ENCODE measurements at regions of chr10 and their contacts with region 1.

Region 1: DNA sequence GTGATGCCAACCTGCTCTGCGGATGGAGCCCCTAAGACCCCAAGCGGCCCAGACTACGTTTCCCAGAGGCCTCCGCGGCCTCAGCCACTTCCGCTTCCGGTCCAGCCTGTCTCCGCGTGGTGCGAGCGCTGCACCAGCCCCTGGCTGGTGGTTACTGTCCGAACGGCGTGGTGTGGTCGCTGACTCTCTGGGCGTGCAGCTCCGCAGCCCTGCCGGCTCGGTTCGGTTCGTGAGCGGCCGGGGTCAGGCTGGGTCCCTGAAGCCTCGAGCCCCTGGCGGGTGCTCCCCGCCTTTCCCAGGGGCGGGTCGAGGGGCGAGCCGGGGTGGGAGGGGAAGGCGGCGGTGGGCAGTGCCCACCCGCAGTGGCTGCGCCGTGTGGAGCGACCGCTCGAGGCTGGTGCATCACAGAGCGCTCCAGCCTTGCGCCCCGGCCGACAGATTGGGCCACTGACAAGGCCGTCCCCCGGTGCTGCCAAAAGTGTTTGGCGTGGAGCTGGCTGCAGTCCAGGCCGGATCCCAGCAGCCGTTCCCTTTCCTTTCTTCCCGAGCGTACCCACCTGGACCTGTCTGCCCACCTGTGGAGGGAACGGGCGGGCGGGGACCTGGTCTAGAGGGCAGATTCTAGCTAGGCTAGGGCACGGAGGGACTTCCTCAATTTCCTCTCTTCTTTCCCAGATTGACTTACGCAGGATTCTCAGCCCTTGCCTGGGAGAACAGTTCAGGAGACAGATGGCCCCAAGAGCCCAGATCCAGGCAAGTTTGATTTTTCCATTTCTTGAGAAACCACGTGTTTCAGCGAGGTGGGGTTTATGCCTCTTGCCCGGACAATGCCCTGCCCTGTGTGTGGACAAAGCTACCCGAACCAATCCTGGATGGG is at the start of gene ZNF485:
- DNase-seq: peak; percentile 89 to 91 (median 90)
- ATAC-seq: peak; percentile 99
- H3K4me3 ChIP-seq: peak within 1 kb of the TSS; percentile 75
- H3K27ac ChIP-seq: peak within 1 kb of the TSS; percentile 75
- H3K4me1 ChIP-seq: peaks cover 0 to 12% of the 10 kb centered on the region in 2 experiments; a peak in 3 of 5 replicates
- H3K27me3 ChIP-seq: peaks cover 4 to 11% of the 10 kb centered on the region in 2 experiments; a peak in 4 of 5 replicates
- CTCF ChIP-seq: no peak
- EP300 ChIP-seq: no peak
- POLR2A ChIP-seq: peak; percentile 91
- RAD21 ChIP-seq: peak in 1 of 2 experiments; percentile 16; a peak in 1 of 4 replicates
- polyA plus RNA-seq, gene ZNF485: 11.1 to 13.8 TPM

Region 2: GRCh38 chr10:43594944-43595589 is 11.5 kb before region 1 on chr10:
- CTCF ChIA-PET with region 1: no interaction called
- POLR2A ChIA-PET with region 1: interaction called, 12 read pairs
- in situ Hi-C with region 1: no loop called
- intact Hi-C with region 1: no loop called
- DNase-seq: peak in 1 of 4 experiments; percentile 62
- ATAC-seq: peak; percentile 77
- H3K4me3 ChIP-seq: peak overlapping the region; percentile 27
- H3K27ac ChIP-seq: peak overlapping the region; percentile 45; the same call in 1 of the 3 replicates
- H3K4me1 ChIP-seq: peaks cover 11 to 19% of the 10 kb centered on the region in 2 experiments
- H3K27me3 ChIP-seq: no peaks in the 10 kb centered on the region; a peak in 1 of 5 replicates
- CTCF ChIP-seq: no peak
- EP300 ChIP-seq: no peak
- POLR2A ChIP-seq: no peak
- RAD21 ChIP-seq: no peak